ENCODE measurements at regions of chr5 and their contacts with region 1.

Region 1: GRCh38 chr5:173972925-173973615 is 15.9 kb upstream of the C5orf47 start:
- DNase-seq: peak; percentile 85
- H3K4me3 ChIP-seq: peak overlapping the region; percentile 26 to 42
- H3K27ac ChIP-seq: peak overlapping the region in 1 of 2 donors; percentile 43
- H3K4me1 ChIP-seq: no peaks in the 10 kb centered on the region
- H3K27me3 ChIP-seq: no peaks in the 10 kb centered on the region
- CTCF ChIP-seq: peak; percentile 79 to 95 (median 94)
- POLR2A ChIP-seq: no peak

Region 2: DNA sequence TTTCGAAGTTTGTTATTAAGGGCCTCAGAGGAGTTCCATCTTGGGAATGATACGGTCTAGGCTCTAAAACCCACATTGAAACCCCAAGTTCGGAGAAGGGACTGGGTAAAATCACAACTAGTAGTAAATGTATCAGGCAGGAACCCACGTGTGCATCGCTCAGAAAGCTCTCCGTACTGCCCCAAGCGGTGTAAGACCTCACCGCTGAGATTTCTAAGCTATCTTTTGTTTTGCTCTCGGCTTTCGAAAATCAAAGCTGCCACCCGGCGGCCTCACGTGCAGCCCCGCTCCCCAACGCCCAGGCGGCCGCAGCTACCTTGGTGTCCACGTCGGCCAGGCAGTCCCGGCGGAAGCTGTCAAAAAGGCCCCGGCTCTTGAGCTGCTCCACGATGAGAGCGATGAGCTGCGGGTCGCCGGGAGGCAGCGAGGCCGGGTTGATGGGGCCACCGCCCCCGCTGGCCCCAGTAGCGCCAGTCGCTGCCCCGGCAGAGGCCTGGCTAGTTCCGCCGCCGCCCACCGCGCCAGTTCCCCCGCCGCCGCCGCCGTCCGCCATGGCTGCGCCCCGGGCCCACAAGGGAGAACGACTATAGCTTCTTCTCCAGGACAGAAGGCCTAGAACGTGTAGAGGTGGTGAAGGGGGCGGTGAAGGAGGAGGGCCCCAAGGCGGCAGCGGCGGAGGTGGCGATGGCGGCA is 357.0 kb before region 1 on chr5:
- intact Hi-C with region 1: loop called (anchors 1 kb)
- DNase-seq: peak; percentile 73
- H3K4me3 ChIP-seq: peak overlapping the region; percentile 73 to 93
- H3K27ac ChIP-seq: peak overlapping the region; percentile 91
- H3K4me1 ChIP-seq: peaks cover 13% of the 10 kb centered on the region
- H3K27me3 ChIP-seq: no peaks in the 10 kb centered on the region
- CTCF ChIP-seq: peak; percentile 26 to 67 (median 62)
- POLR2A ChIP-seq: no peak

Region 3: GRCh38 chr5:173753307-173754168 is 219.5 kb before region 1 on chr5:
- intact Hi-C with region 1: loop called (anchors 5 kb)
- DNase-seq: peak; percentile 48
- H3K4me3 ChIP-seq: no peak overlapping the region
- H3K27ac ChIP-seq: peak overlapping the region in 1 of 2 donors; percentile 53
- H3K4me1 ChIP-seq: no peaks in the 10 kb centered on the region
- H3K27me3 ChIP-seq: no peaks in the 10 kb centered on the region
- CTCF ChIP-seq: no peak
- POLR2A ChIP-seq: no peak

Region 4: DNA sequence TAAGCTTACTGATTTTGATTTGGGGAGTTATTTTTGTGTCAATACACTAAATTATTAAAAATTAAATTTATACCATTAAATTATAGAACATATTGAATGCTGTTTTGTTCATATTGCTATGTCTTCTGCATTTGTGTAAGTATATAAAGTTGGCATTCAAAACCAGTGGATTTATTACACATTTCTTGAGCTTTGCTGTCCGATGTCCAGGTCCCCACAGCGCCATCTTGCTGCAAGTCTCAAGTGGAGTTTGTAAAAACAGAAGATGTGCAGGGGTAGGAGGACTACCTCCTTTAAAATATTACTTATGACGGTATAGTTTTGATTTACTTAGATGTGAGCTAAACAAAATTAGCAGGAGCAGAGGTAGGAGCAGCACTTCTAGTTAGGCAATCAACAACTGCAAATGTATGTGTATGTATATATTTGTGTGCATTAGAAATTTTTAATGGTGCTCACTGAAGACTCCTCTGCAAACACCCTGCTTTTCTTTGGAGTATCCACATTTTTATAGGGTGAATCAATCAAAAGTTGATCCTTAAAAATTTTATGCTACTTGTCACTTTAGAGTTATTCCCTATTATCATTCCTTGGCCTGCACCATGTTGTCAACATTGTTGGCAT is 47.5 kb before region 1 on chr5:
- intact Hi-C with region 1: loop called (anchors 5 kb)
- DNase-seq: no peak
- H3K4me3 ChIP-seq: no peak overlapping the region
- H3K27ac ChIP-seq: peak overlapping the region in 1 of 2 donors; percentile 33
- H3K4me1 ChIP-seq: peaks cover 12% of the 10 kb centered on the region
- H3K27me3 ChIP-seq: no peaks in the 10 kb centered on the region
- CTCF ChIP-seq: peak in 3 of 4 experiments; percentile 23 to 34 (median 25)
- POLR2A ChIP-seq: no peak

Measured in prostate gland (tissue), 2 donors.